ENCODE measurements at regions of chr5 and their contacts with region 1.

Region 1: DNA sequence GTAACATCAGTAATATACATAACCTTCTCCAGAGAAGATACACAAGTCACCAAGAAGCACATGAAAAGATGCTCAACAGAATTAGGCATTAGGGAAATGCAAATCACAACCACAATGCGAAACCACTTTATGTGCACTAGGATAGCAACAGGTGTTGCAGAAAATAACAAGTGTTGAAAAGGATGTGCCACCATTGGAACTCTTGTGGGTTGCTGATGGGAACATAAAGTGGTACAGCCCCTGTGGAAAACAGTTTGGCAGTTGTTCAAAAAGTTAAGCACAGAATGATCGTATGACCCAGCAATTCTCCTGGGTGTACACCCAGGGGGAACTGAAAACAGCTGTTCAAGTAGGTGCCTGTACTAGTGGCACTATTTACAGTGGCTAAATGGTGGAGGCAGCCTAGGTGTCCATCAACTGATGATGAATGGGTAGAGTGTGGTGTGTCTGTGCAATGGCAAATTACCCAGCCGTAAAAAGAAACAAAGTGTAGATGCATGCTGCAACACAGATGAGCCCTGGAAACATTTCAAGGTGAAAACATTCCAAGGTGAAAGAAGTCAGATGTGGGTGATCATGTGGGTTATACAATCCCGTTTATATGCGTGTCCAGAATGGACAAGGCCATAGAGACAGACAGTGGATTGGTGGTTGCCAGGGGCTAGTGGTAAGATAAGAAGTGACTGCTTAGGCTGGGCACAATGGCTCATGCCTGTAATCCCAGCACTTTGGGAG is 27.2 kb downstream of the CCDC69 start:
- DNase-seq: peak; percentile 96
- H3K4me3 ChIP-seq: peak overlapping the region; percentile 25
- H3K27ac ChIP-seq: peak overlapping the region; percentile 92
- H3K4me1 ChIP-seq: peaks cover 55% of the 10 kb centered on the region
- CTCF ChIP-seq: no peak

Region 2: GRCh38 chr5:150960791-150961396 is 235.8 kb before region 1 on chr5:
- CTCF ChIA-PET with region 1: no interaction called
- POLR2A ChIA-PET with region 1: no interaction called
- intact Hi-C with region 1: no loop called
- DNase-seq: peak; percentile 48
- H3K4me3 ChIP-seq: no peak overlapping the region
- H3K27ac ChIP-seq: no peak overlapping the region
- H3K4me1 ChIP-seq: no peaks in the 10 kb centered on the region
- CTCF ChIP-seq: no peak

Region 3: GRCh38 chr5:151233616-151234085 is 36.9 kb after region 1 on chr5:
- CTCF ChIA-PET with region 1: no interaction called
- POLR2A ChIA-PET with region 1: interaction called, 6 read pairs
- intact Hi-C with region 1: loop called (anchors 1 kb)
- DNase-seq: peak; percentile 90
- H3K4me3 ChIP-seq: peak overlapping the region; percentile 57
- H3K27ac ChIP-seq: peak overlapping the region; percentile 96
- H3K4me1 ChIP-seq: peaks cover 77% of the 10 kb centered on the region
- CTCF ChIP-seq: no peak

Region 4: GRCh38 chr5:151244206-151244605 is 47.5 kb after region 1 on chr5:
- CTCF ChIA-PET with region 1: no interaction called
- POLR2A ChIA-PET with region 1: no interaction called
- intact Hi-C with region 1: no loop called
- DNase-seq: no peak
- H3K4me3 ChIP-seq: no peak overlapping the region
- H3K27ac ChIP-seq: no peak overlapping the region
- H3K4me1 ChIP-seq: peaks cover 46% of the 10 kb centered on the region
- CTCF ChIP-seq: no peak

Region 5: DNA sequence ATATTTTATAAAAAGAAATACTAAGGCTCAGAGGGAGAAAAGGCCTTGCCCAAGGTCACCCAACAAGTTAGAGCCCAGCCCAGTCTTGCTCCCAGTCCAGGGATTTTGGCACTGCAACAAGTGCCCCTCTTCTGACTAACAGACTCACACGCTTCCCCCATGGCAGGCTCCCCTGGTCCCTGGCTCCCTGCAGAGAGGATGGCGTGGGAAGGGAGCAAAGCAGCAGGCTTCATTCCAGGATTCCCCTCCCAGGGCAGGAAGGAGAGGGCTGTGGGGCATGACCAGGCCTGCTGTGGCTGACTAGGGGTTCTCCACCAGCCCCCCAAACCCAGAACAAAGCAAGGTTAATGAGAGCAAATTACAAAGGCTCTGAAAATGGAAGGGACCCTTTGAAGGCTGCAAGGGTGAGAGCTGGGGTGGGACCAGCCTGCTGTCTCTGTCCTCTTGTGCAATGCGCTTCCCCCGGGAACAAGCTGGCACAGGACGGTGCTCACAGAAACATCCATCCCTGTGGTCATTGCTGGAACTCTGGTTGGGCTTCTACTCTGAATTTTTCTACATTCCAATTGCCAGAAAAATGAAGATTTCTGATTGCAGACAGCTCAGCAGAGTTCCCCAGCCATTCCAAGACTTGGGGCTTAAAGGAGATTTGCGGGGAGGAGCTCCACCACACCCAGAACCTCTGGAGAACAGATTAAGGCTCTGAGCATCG is 431.5 kb after region 1 on chr5:
- CTCF ChIA-PET with region 1: no interaction called
- POLR2A ChIA-PET with region 1: no interaction called
- intact Hi-C with region 1: no loop called
- DNase-seq: no peak
- H3K4me3 ChIP-seq: no peak overlapping the region
- H3K27ac ChIP-seq: no peak overlapping the region
- H3K4me1 ChIP-seq: no peaks in the 10 kb centered on the region
- CTCF ChIP-seq: no peak